Activated T-helper 2 cell treated with anti-CD3 and anti-CD28 coated beads, Interferon-gamma antibody, Interleukin-2, Interleukin-4, amounts not matched to agents 10 μg/mL and 5 μg/mL and 100 μg/mL, durations not matched to agents 14 hours and 24 hours and 36 hours (primary cell): ENCODE measurements at regions of chr4 and their contacts with region 1.

Region 1: DNA sequence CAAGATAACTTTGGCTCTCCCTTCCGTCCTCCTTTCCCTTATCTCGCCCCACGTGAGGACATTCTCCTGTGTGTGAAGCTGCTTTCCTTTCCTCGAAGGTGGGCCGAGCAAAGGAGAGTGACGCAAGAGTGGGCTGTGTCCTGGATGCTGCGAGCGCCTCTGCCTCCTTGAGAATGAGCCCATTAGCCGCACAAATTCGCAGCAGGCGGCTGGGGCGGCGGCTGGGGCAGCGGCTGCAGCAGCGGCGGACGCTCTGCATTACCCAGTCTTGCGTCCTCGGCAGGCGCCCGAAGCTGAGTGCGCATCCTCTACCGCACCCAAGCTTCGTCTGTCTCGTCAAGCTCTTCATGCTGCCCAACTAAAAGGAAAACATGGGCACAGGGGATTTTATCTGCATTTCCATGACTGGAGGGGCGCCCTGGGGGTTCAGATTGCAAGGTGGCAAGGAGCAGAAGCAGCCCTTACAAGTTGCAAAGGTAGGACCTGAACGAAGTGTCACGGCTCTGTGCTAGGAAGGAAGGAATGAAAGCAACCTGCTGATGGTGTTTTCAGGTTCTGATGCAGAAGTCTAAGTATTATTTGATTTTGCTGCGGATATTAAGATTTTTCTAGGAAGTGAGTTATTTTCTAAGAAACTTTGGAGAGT is at the start of gene SYNPO2:
- DNase-seq: peak; percentile 19
- H3K4me3 Mint-ChIP-seq: peak within 1 kb of the TSS; percentile 75
- H3K27ac Mint-ChIP-seq: no peak within 1 kb of the TSS
- H3K4me1 Mint-ChIP-seq: peaks cover 16% of the 10 kb centered on the region
- H3K27me3 Mint-ChIP-seq: peaks cover 32% of the 10 kb centered on the region
- total RNA-seq, gene SYNPO2: 0.09 TPM in 2 replicates

Region 2: GRCh38 chr4:118586357-118586790 is 302.4 kb before region 1 on chr4:
- intact Hi-C with region 1: no loop called
- DNase-seq: no peak
- H3K4me3 Mint-ChIP-seq: no peak overlapping the region
- H3K27ac Mint-ChIP-seq: no peak overlapping the region
- H3K4me1 Mint-ChIP-seq: peaks cover 7% of the 10 kb centered on the region
- H3K27me3 Mint-ChIP-seq: peaks cover 10% of the 10 kb centered on the region

Region 3: DNA sequence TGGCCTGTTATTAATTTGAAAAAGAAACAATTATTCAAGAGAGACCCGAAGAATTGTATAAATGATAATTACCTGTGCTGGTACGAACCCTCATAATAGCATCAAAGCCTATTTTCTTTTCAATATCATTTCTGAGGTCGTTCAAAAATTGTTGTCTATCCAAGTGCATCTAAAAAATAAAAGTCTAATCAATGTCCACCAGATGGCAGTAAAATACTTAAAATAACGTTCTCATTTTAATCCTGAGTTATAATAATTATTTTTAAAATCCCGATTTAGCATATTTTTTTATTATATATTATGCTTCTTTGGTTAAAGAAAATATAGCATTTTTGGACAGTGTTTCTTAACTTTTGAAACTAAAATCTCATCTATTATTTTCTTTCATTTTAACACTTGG is 147.9 kb before region 1 on chr4:
- intact Hi-C with region 1: loop called (anchors 1 kb)
- DNase-seq: no peak
- H3K4me3 Mint-ChIP-seq: no peak overlapping the region
- H3K27ac Mint-ChIP-seq: no peak overlapping the region
- H3K4me1 Mint-ChIP-seq: no peaks in the 10 kb centered on the region
- H3K27me3 Mint-ChIP-seq: no peaks in the 10 kb centered on the region